ENCODE measurements at regions of chr1 and their contacts with region 1.

Region 1: GRCh38 chr1:178344513-178345082 is 152.2 kb downstream of the CLEC20A start:
- DNase-seq: peak; percentile 87
- H3K4me3 ChIP-seq: no peak overlapping the region
- H3K27ac ChIP-seq: peak overlapping the region; percentile 72
- H3K4me1 ChIP-seq: peaks cover 27% of the 10 kb centered on the region
- H3K27me3 ChIP-seq: no peaks in the 10 kb centered on the region
- CTCF ChIP-seq: peak; percentile 29 to 50
- POLR2A ChIP-seq: no peak

Region 2: GRCh38 chr1:177392336-177392735 is 952.3 kb before region 1 on chr1:
- CTCF ChIA-PET with region 1: no interaction called
- POLR2A ChIA-PET with region 1: no interaction called
- dilution Hi-C with region 1: no loop called
- intact Hi-C with region 1: no loop called
- DNase-seq: no peak
- H3K4me3 ChIP-seq: no peak overlapping the region
- H3K27ac ChIP-seq: no peak overlapping the region
- H3K4me1 ChIP-seq: no peaks in the 10 kb centered on the region
- H3K27me3 ChIP-seq: no peaks in the 10 kb centered on the region
- CTCF ChIP-seq: no peak
- POLR2A ChIP-seq: no peak

Region 3: DNA sequence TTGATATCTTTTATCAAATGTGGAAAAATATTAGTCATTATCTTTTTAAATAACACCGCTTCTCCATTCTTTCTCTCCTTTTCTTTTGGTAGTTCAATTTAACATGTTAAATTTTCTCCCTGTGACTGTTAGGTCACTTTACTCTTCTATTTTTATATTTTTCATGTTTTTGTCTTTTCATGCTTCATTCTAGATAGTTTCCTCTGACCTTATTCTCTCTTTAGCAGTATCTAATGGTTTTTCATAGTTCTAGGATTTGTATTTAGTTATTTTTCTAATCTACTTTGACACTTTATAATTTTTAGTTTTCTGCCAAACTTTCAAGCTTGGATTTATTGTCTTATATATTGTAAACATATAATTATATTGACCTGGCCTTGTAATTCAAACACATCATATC is 134.7 kb before region 1 on chr1:
- CTCF ChIA-PET with region 1: no interaction called
- POLR2A ChIA-PET with region 1: no interaction called
- dilution Hi-C with region 1: no loop called
- intact Hi-C with region 1: no loop called
- DNase-seq: no peak
- H3K4me3 ChIP-seq: no peak overlapping the region
- H3K27ac ChIP-seq: no peak overlapping the region
- H3K4me1 ChIP-seq: no peaks in the 10 kb centered on the region
- H3K27me3 ChIP-seq: no peaks in the 10 kb centered on the region
- CTCF ChIP-seq: no peak
- POLR2A ChIP-seq: no peak

Region 4: GRCh38 chr1:178407655-178408054 is 63.1 kb after region 1 on chr1:
- CTCF ChIA-PET with region 1: no interaction called
- POLR2A ChIA-PET with region 1: no interaction called
- dilution Hi-C with region 1: no loop called
- intact Hi-C with region 1: loop called (anchors 2 kb)
- DNase-seq: no peak
- H3K4me3 ChIP-seq: no peak overlapping the region
- H3K27ac ChIP-seq: no peak overlapping the region
- H3K4me1 ChIP-seq: peaks cover 12% of the 10 kb centered on the region
- H3K27me3 ChIP-seq: no peaks in the 10 kb centered on the region
- CTCF ChIP-seq: no peak
- POLR2A ChIP-seq: no peak

Region 5: DNA sequence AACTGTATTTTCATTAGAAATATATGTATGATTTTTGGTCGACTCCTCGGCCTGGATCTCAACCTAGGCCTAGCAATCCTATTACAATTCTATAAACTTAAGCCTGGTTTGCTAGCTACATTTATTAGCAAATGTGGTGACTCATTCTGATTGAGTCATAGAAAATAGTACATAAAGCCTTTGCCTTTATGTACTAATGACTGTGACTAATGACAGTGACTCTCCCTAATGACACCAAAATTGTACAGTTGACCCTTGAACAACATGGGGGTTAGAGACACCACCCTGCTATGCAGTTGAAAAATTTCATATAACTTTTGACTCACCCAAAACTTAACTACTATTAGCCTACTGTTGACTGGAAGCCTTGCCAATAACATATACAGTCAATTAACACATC is 73.3 kb after region 1 on chr1:
- CTCF ChIA-PET with region 1: no interaction called
- POLR2A ChIA-PET with region 1: no interaction called
- dilution Hi-C with region 1: no loop called
- intact Hi-C with region 1: loop called (anchors 2 kb)
- DNase-seq: peak; percentile 45
- H3K4me3 ChIP-seq: no peak overlapping the region
- H3K27ac ChIP-seq: no peak overlapping the region
- H3K4me1 ChIP-seq: no peaks in the 10 kb centered on the region
- H3K27me3 ChIP-seq: no peaks in the 10 kb centered on the region
- CTCF ChIP-seq: no peak
- POLR2A ChIP-seq: no peak